Sigmoid colon (tissue), 7 donors: ENCODE measurements at regions of chrX and their contacts with region 1.

Region 1: DNA sequence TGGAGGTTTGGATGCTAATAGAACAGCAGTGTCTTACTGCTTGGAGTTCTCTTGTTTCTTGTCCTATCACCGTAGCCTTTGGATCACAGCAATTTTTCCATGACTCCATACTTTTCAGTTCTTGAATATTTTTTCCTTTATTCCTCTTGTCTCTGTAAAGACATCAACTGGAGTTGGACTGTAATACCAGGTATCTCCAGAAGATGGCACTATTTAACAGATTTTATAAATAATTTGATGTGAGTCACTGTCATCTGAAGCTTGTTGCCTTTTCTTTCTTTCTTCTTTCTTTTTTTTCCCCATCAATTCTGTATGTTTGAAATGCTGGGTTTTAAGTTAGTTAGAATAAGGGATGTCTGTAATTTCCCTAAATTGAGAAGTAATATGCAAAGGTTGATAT is 24.1 kb downstream of the HPRT1 start:
- DNase-seq: no peak
- H3K4me3 ChIP-seq: no peak overlapping the region
- H3K27ac ChIP-seq: no peak overlapping the region
- H3K4me1 ChIP-seq: no peaks in the 10 kb centered on the region
- H3K27me3 ChIP-seq: no peaks in the 10 kb centered on the region
- CTCF ChIP-seq: peak; percentile 11 to 45 (median 34)
- EP300 ChIP-seq: no peak
- POLR2A ChIP-seq: no peak

Region 2: GRCh38 chrX:134646691-134647090 is 162.7 kb after region 1 on chrX:
- intact Hi-C with region 1: no loop called
- DNase-seq: no peak
- H3K4me3 ChIP-seq: no peak overlapping the region
- H3K27ac ChIP-seq: no peak overlapping the region
- H3K4me1 ChIP-seq: no peaks in the 10 kb centered on the region
- H3K27me3 ChIP-seq: no peaks in the 10 kb centered on the region
- CTCF ChIP-seq: no peak
- EP300 ChIP-seq: no peak
- POLR2A ChIP-seq: no peak

Region 3: DNA sequence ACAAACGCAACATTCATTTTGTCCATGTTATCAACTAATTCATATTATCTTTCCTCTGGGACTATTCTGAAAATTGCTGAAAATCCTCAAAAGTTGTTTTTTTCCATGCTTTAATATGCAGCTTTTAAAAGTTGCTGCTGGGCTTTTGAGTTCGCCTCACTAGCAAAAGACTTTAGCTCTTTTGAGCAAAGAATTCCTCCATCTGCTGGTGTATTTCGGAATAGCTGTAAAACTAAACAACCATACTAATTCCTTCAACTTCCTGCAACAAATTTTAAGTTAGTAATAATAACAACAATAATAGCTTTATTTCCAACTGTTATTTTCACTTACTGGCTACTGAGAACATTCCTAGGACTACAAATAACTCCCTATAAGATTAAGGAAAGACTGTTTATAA is 298.8 kb after region 1 on chrX:
- intact Hi-C with region 1: loop called (anchors 10 kb)
- DNase-seq: no peak
- H3K4me3 ChIP-seq: no peak overlapping the region
- H3K27ac ChIP-seq: no peak overlapping the region
- H3K4me1 ChIP-seq: no peaks in the 10 kb centered on the region
- H3K27me3 ChIP-seq: no peaks in the 10 kb centered on the region
- CTCF ChIP-seq: peak in 2 of 4 experiments; percentile 19 to 43
- EP300 ChIP-seq: no peak
- POLR2A ChIP-seq: no peak